ENCODE measurements at regions of chr1 and their contacts with region 1.

Region 1: GRCh38 chr1:6794164-6794563 is 8.9 kb downstream of the CAMTA1 start:
- DNase-seq: no peak
- ATAC-seq: no peak
- H3K4me3 ChIP-seq: no peak overlapping the region
- H3K27ac ChIP-seq: no peak overlapping the region
- H3K4me1 ChIP-seq: peaks cover 4 to 67% (median 37%) of the 10 kb centered on the region in 12 donors
- H3K27me3 ChIP-seq: no peaks in the 10 kb centered on the region
- CTCF ChIP-seq: peak in 11 of 12 donors; percentile 14 to 61 (median 52)
- POLR2A ChIP-seq: no peak

Region 2: DNA sequence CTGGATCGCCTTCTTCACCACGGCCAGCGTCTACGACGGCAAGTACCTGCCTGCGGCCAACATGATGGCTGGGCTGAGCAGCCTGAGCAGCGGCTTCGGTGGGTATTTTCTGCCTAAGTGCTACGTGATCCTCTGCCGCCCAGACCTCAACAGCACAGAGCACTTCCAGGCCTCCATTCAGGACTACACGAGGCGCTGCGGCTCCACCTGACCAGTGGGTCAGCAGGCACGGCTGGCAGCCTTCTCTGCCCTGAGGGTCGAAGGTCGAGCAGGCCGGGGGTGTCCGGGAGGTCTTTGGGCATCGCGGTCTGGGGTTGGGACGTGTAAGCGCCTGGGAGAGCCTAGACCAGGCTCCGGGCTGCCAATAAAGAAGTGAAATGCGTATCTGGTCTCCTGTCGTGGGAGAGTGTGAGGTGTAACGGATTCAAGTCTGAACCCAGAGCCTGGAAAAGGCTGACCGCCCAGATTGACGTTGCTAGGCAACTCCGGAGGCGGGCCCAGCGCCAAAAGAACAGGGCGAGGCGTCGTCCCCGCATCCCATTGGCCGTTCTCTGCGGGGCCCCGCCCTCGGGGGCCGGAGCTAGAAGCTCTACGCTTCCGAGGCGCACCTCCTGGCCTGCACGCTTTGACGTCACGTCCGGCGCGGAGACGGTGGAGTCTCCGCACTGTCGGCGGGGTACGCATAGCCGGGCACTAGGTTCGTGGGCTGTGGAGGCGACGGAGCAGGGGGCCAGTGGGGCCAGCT is 214.6 kb before region 1 on chr1 and contains the start of gene ZBTB48:
- intact Hi-C with region 1: no loop called
- DNase-seq: peak; percentile 99 to 100 (median 100)
- ATAC-seq: peak; percentile 95 to 98 (median 98)
- H3K4me3 ChIP-seq: peak within 1 kb of the TSS; percentile 65 to 97 (median 83)
- H3K27ac ChIP-seq: peak within 1 kb of the TSS; percentile 79 to 97 (median 91)
- H3K4me1 ChIP-seq: peaks cover 6 to 52% (median 35%) of the 10 kb centered on the region in 12 donors
- H3K27me3 ChIP-seq: no peaks in the 10 kb centered on the region
- CTCF ChIP-seq: no peak
- POLR2A ChIP-seq: peak; percentile 92 to 95
- total RNA-seq, gene ZBTB48: 6.4 to 23.1 (median 11.8) TPM

Region 3: DNA sequence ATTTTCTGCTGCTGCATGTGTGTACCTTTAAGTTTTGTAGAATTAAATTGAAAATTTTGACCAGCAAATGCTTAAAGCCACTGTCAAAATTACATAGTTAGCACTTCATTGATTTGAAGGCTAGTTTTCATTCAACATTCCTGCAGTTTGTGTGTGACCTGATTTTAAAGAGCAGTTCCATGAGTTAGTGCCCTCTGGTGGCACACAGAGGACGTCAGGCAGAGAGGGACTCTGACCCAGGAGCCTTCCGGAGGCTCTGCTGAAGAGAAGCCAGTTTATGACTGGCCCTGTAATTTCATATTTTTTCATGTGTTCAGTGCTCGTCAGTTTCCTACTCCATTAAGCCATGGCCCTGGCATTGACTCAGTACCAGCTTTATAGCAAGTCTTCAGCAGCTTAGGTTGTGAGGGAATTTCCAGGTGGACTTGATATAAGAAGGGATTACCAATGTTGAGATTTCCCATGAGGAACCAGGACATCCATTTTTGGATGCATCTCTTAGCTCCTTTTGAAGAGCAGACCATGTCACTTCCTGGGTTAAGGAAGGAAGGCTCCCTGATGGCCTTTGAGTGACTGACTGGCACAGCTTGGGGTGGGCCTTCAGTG is 95.8 kb after region 1 on chr1:
- intact Hi-C with region 1: loop called in 8 of 10 experiments (anchors 2 to 10 kb)
- DNase-seq: peak in 4 of 5 donors; percentile 38 to 52 (median 45)
- ATAC-seq: peak; percentile 37 to 84 (median 68)
- H3K4me3 ChIP-seq: no peak overlapping the region
- H3K27ac ChIP-seq: no peak overlapping the region
- H3K4me1 ChIP-seq: peaks cover 0 to 9% (median 0%) of the 10 kb centered on the region in 12 donors
- H3K27me3 ChIP-seq: no peaks in the 10 kb centered on the region
- CTCF ChIP-seq: peak; percentile 67 to 90 (median 80)
- POLR2A ChIP-seq: no peak

Region 4: GRCh38 chr1:7218210-7218832 is 424.2 kb after region 1 on chr1:
- intact Hi-C with region 1: loop called in 1 of 10 experiments (anchors 5 kb)
- DNase-seq: no peak
- ATAC-seq: no peak
- H3K4me3 ChIP-seq: no peak overlapping the region
- H3K27ac ChIP-seq: no peak overlapping the region
- H3K4me1 ChIP-seq: no peaks in the 10 kb centered on the region
- H3K27me3 ChIP-seq: peaks cover 0 to 9% (median 0%) of the 10 kb centered on the region in 9 donors
- CTCF ChIP-seq: peak; percentile 39 to 70 (median 60)
- POLR2A ChIP-seq: no peak

Measured in heart left ventricle (tissue), 16 donors.